A549 (cell line): ENCODE measurements at regions of chr2 and their contacts with region 1.

Region 1: DNA sequence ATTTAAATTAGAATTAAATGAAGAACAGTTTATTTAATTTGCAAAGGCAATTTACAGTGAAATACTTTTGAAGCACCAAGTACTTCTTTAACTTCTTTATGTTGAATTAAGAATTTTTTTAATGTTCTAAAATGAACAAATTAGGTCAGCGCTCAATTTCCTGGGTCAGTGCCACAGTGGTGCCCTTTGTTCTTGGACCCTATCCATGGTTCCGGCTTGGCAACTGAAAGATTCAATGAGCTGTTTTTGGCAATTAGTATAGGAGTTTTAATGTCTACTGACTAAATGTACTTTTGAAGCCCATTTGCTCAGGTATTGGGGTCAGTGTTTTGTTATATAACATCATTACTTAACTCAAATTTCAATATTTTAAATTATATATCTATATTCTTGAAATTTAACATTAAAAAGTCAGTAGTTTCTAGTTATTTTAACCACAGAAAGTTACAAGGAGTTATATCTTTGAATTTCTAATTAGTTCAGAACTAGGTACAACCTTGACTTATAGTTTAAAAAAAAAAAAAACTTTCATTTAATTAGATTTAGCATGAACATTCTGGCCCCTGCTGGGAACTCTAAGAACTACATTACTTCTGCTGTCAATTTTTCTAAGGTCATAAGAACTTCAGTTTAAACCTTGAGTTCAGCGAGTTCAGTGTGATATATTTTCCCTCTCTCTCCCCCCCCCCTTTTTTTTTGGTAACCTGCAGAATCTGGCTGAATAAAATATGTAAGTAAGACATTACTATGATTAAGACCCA is 7.6 kb upstream of the MSTN start:
- DNase-seq: peak; percentile 7 to 74
- ATAC-seq: peak in 1 of 2 experiments; percentile 43; a peak in 2 of 6 replicates
- H3K4me3 ChIP-seq: no peak overlapping the region
- H3K27ac ChIP-seq: no peak overlapping the region
- H3K4me1 ChIP-seq: no peaks in the 10 kb centered on the region
- CTCF ChIP-seq: peak; percentile 82
- EP300 ChIP-seq: no peak
- POLR2A ChIP-seq: no peak
- RAD21 ChIP-seq: peak; percentile 87 to 94

Region 2: DNA sequence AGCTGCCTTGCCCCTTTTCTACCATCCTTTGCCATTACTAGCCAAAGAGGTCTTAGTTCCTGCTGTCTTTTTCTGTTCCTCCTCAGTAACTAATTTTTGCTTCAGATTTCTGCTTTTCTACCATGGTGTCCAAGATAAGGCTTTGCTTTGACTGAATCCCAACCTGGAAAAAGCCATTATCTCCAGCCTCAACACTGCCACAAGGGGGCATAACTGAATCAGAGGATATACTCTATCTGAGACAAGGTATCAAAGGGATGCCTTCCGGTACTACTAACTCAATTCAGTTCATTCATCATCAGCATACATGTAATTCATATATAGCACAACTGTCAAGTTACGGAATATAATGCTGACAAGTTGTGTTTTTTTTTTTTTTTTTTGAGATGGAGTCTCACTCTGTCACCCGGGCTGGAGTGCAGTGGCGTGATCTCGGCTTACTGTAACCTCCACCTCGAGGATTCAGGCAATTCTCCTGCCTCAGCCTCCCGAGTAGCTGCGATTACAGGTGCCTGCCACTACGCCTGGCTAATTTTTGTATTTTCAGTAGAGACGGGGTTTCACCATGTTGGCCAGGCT is 318.9 kb before region 1 on chr2:
- CTCF ChIA-PET with region 1: interaction called, 11 read pairs
- POLR2A ChIA-PET with region 1: no interaction called
- DNase-seq: peak; percentile 38 to 44
- ATAC-seq: peak; percentile 84 to 92; a peak in 5 of 6 replicates
- H3K4me3 ChIP-seq: no peak overlapping the region
- H3K27ac ChIP-seq: no peak overlapping the region
- H3K4me1 ChIP-seq: peaks cover 5% of the 10 kb centered on the region; the same call in 1 of the 3 replicates
- CTCF ChIP-seq: peak; percentile 60
- EP300 ChIP-seq: no peak
- POLR2A ChIP-seq: no peak
- RAD21 ChIP-seq: peak; percentile 45 to 64

Region 3: DNA sequence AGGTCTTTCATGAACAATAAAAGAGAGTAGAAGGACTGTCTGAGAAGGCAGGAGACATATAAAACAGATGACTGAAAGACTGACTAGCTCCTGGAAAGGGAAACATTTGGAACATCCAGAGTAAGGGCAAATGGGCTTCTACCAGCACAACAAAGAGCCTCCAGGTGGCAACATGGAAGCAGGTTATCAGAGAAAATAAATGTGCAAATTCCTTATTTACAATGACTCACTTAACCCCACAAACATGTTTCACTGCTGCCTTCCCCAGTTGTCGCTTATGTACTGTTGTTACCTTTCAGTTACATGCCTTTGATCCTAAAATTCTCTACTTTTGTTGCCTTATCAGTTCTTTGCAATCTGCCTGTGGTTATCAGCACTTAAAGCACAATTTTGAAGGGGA is 132.5 kb after region 1 on chr2:
- CTCF ChIA-PET with region 1: no interaction called
- POLR2A ChIA-PET with region 1: no interaction called
- DNase-seq: peak in 1 of 2 experiments; percentile 23
- ATAC-seq: no peak
- H3K4me3 ChIP-seq: no peak overlapping the region
- H3K27ac ChIP-seq: no peak overlapping the region
- H3K4me1 ChIP-seq: peaks cover 4% of the 10 kb centered on the region; the same call in 1 of the 3 replicates
- CTCF ChIP-seq: 0 out of 3 replicates have a peak, but pooled peaks have one; percentile 7
- EP300 ChIP-seq: no peak
- POLR2A ChIP-seq: no peak
- RAD21 ChIP-seq: 0 out of 5 replicates have a peak, but pooled peaks of 1 of the 2 experiments have one; percentile 13